Esophagus squamous epithelium (tissue), 5 donors: ENCODE measurements at regions of chr2 and their contacts with region 1.

Region 1: GRCh38 chr2:221573430-221574230 is 1.5 kb upstream of the EPHA4 start:
- DNase-seq: no peak
- H3K4me3 ChIP-seq: peak overlapping the region; percentile 70 to 87 (median 79)
- H3K27ac ChIP-seq: peak overlapping the region; percentile 82 to 88 (median 86)
- H3K4me1 ChIP-seq: peaks cover 13 to 54% (median 15%) of the 10 kb centered on the region in 3 donors
- H3K27me3 ChIP-seq: peaks cover 0 to 82% (median 9%) of the 10 kb centered on the region in 4 donors
- CTCF ChIP-seq: peak; percentile 95 to 99 (median 98)
- POLR2A ChIP-seq: no peak

Region 2: GRCh38 chr2:219744600-219744999 is 1829.0 kb before region 1 on chr2:
- intact Hi-C with region 1: loop called (anchors 10 kb)
- DNase-seq: no peak
- H3K4me3 ChIP-seq: no peak overlapping the region
- H3K27ac ChIP-seq: no peak overlapping the region
- H3K4me1 ChIP-seq: peaks cover 0 to 33% (median 3%) of the 10 kb centered on the region in 3 donors
- H3K27me3 ChIP-seq: no peaks in the 10 kb centered on the region
- CTCF ChIP-seq: no peak
- POLR2A ChIP-seq: no peak

Region 3: DNA sequence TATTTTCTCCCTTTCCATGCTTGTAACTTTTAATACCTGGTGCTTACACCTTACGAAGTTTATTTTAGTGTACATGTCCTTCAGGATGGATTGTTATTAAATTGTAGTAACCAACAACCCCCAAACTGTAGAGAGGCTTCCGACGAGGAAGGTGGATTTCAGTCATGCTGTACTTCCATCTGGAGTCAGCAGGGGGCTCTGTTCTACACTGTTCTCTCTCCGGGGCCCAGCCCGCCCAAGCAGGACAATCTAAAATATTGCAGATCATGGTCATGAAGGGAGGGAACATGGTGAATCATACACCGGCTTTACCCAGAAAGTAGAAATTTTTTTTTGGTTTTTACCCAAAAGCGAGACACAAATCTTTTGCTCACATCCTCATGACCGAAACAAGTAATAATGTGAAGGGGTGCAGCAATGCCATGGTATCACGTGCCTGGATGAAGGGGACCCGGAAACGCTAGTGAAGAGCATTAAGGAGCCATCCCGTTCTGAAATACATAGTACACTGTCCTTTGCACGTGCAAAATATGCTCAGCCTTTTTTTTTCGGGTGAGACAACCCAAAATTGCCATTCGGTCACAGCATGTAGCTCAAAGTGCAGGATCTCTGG is 886.3 kb before region 1 on chr2:
- intact Hi-C with region 1: loop called (anchors 5 kb)
- DNase-seq: no peak
- H3K4me3 ChIP-seq: no peak overlapping the region
- H3K27ac ChIP-seq: no peak overlapping the region
- H3K4me1 ChIP-seq: peaks cover 0 to 24% (median 0%) of the 10 kb centered on the region in 3 donors
- H3K27me3 ChIP-seq: no peaks in the 10 kb centered on the region
- CTCF ChIP-seq: peak; percentile 56 to 87 (median 81)
- POLR2A ChIP-seq: no peak

Region 4: DNA sequence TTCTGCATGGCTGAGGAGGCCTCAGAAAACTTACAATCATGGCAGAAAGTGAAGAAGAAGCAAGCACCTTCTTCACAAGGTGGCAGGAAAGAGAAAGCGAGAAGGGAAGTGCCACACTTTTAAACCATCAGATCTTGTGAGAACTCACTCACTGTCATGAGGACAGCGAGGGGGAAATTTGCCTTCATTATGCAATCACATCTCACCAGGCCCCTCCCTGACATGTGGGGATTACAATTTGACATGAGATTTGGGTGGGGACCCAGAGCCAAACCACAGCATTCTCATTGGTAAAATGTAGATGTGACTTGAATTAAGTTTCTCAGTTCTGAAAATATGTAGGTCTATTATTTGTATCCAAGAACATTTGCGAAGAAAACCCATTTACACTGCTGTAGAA is 856.3 kb before region 1 on chr2:
- intact Hi-C with region 1: no loop called
- DNase-seq: no peak
- H3K4me3 ChIP-seq: no peak overlapping the region
- H3K27ac ChIP-seq: no peak overlapping the region
- H3K4me1 ChIP-seq: no peaks in the 10 kb centered on the region
- H3K27me3 ChIP-seq: no peaks in the 10 kb centered on the region
- CTCF ChIP-seq: no peak
- POLR2A ChIP-seq: no peak